ENCODE measurements at regions of chr20 and their contacts with region 1.

Region 1: DNA sequence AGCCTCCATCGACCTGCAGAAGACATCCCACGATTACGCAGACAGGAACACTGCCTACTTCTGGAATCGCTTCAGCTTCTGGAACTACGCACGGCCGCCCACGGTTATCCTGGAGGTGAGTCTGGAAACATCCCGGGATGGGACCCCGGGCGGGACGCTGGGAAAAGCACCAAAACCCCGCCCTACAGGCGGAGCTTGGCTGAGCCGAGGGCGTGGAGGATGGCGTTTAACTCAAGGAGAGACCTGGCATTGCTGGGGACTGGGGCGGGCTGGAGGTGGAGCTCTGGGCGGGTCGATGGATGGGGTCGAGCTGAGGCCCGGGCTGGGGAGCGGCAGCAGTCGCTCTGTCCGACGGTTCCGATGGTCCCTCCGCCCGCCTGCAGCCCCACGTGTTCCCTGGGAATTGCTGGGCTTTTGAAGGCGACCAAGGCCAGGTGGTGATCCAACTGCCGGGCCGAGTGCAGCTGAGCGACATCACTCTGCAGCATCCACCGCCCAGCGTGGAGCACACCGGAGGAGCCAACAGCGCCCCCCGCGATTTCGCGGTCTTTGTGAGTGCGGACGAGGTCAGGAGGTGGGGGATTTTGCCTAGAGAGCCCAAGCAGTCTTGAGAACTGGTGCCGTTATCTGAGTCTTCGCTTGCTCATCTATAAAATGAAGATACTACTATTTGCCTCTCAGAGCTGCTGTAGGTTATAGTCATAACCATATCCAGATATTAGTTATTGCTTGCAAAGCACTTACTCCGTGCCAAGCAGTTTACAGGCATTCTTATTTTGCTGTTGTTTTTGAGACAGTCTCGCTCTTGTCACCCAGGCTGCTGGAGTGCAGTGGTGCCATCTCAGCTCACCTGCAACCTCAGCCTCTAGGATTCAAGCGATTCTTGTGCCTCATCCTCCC is 3.8 kb downstream of the SPAG4 start:
- DNase-seq: peak; percentile 87
- ATAC-seq: peak; percentile 43
- H3K4me3 Mint-ChIP-seq: peak overlapping the region; percentile 85
- H3K27ac Mint-ChIP-seq: peak overlapping the region; percentile 84
- H3K4me1 Mint-ChIP-seq: peaks cover 42% of the 10 kb centered on the region
- H3K27me3 Mint-ChIP-seq: no peaks in the 10 kb centered on the region

Region 2: DNA sequence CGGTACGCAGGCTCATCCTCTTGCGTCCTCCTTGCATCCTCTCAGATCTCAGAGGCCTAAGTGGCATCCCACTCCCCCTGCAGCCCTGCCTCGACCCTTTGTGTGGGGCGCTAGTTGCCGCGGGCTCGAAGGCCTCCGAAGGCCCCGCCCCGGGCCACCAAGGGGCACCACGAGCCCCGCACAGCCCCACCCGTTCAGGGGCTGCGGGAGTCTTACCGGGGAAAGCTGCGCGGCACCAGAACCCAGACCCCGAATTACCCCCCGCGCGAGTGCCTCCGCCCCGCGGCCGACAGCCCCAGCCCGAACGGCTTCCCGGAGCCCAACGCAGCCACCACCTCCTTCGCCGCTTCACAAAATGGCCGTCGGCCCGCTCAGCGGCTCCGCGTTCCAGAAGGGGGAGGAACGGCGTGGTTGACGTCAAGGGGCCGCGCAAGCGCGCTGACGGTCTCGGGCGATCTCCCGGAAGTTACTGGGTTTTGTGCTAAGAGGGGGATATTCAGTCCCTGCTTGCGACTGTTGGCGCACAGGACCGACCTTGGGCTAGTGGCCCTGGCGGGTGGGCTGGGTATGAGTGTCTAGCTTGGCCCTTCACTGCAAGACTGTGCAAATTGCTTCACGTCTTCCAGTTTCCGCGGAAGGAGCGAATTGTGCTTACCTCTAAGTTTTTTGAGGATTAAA is 45.2 kb after region 1 on chr20 and contains the starts of genes CPNE1 and RBM12:
- CTCF ChIA-PET with region 1: interaction called, 59 read pairs
- DNase-seq: peak; percentile 97
- ATAC-seq: peak; percentile 80
- H3K4me3 Mint-ChIP-seq: peak within 1 kb of the TSS; percentile 96
- H3K27ac Mint-ChIP-seq: peak within 1 kb of the TSS; percentile 95
- H3K4me1 Mint-ChIP-seq: peaks cover 37% of the 10 kb centered on the region
- H3K27me3 Mint-ChIP-seq: no peaks in the 10 kb centered on the region
- total RNA-seq, gene CPNE1: 277 to 286 TPM
- total RNA-seq, gene RBM12: 101 to 137 TPM

Measured in activated CD8-positive, alpha-beta memory T cell treated with anti-CD3 and anti-CD28 coated beads, Interleukin-2, amount 10 ng/mL, durations not matched to agents 7 days and 5 days (primary cell).